Mammary epithelial cell (primary cell): ENCODE measurements at regions of chr16 and their contacts with region 1.

Region 1: GRCh38 chr16:72814226-72814625 is 233.7 kb downstream of the ZFHX3 start:
- DNase-seq: no peak
- H3K4me3 ChIP-seq: no peak overlapping the region
- H3K27ac ChIP-seq: no peak overlapping the region
- H3K4me1 ChIP-seq: no peaks in the 10 kb centered on the region
- H3K27me3 ChIP-seq: no peaks in the 10 kb centered on the region
- CTCF ChIP-seq: no peak

Region 2: DNA sequence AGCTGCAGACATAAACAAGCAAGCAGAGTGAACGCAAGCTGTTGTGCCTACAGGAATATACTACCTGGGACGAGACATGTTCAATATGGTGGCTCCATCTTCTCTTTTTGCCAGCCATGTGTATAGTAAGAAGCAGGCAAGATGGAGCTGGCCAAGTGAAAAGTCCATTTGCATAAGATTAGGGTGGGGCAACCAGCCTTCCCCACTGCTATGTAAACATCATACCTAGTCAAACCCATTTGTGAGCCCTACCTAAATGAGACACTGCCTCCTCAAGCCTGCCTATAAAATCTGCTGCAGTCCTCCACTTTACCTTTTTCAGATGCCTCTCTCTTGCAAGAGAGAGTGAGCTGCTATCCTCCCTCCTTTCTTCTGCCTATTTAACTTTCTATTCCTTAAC is 272.1 kb before region 1 on chr16:
- CTCF ChIA-PET with region 1: no interaction called
- dilution Hi-C with region 1: no loop called
- in situ Hi-C with region 1: no loop called
- intact Hi-C with region 1: no loop called
- DNase-seq: peak; percentile 3
- H3K4me3 ChIP-seq: no peak overlapping the region
- H3K27ac ChIP-seq: no peak overlapping the region
- H3K4me1 ChIP-seq: peaks cover 7% of the 10 kb centered on the region
- H3K27me3 ChIP-seq: no peaks in the 10 kb centered on the region
- CTCF ChIP-seq: no peak

Region 3: GRCh38 chr16:72783716-72784318 is 30.4 kb before region 1 on chr16:
- CTCF ChIA-PET with region 1: no interaction called
- dilution Hi-C with region 1: no loop called
- in situ Hi-C with region 1: no loop called
- intact Hi-C with region 1: no loop called
- DNase-seq: no peak
- H3K4me3 ChIP-seq: no peak overlapping the region
- H3K27ac ChIP-seq: no peak overlapping the region
- H3K4me1 ChIP-seq: peaks cover 8% of the 10 kb centered on the region
- H3K27me3 ChIP-seq: no peaks in the 10 kb centered on the region
- CTCF ChIP-seq: no peak

Region 4: GRCh38 chr16:72926177-72927070 is 112.2 kb after region 1 on chr16:
- CTCF ChIA-PET with region 1: interaction called, 14 read pairs
- dilution Hi-C with region 1: no loop called
- in situ Hi-C with region 1: no loop called
- intact Hi-C with region 1: no loop called
- DNase-seq: no peak
- H3K4me3 ChIP-seq: no peak overlapping the region
- H3K27ac ChIP-seq: no peak overlapping the region
- H3K4me1 ChIP-seq: peaks cover 15% of the 10 kb centered on the region
- H3K27me3 ChIP-seq: no peaks in the 10 kb centered on the region
- CTCF ChIP-seq: no peak